ENCODE measurements at regions of chr16 and their contacts with region 1.

Region 1: DNA sequence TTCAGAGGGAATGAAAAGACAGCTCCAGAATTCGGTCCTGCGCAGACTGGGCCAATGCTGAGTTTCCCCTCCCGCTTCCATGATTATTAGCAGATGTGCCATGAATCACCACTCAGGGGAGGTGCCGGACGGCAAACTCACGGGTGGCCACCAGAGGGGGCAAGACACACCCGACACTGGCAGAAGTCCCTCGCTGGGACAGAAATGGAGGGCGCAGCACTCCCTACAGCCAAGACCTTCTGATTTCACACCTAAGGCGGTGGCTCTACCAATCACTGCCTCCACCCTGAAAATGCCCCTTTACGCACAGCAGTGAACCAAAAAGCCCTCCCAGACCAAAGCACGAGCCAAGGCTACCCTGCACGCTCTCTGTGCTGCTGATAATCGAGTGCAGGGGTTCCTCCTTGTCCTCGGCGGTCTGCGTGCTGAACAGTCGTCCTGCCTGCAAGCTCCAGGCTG is 26.8 kb downstream of the TRAP1 start:
- DNase-seq: peak; percentile 90
- ATAC-seq: peak; percentile 94
- H3K4me3 Mint-ChIP-seq: no peak overlapping the region
- H3K27ac Mint-ChIP-seq: peak overlapping the region; percentile 86
- H3K4me1 Mint-ChIP-seq: peaks cover 4% of the 10 kb centered on the region
- H3K27me3 Mint-ChIP-seq: no peaks in the 10 kb centered on the region
- CTCF ChIP-seq: peak; percentile 77

Region 2: GRCh38 chr16:3587547-3588110 is 102.9 kb before region 1 on chr16:
- CTCF ChIA-PET with region 1: no interaction called
- POLR2A ChIA-PET with region 1: no interaction called
- DNase-seq: no peak
- ATAC-seq: no peak
- H3K4me3 Mint-ChIP-seq: no peak overlapping the region
- H3K27ac Mint-ChIP-seq: no peak overlapping the region
- H3K4me1 Mint-ChIP-seq: peaks cover 3% of the 10 kb centered on the region; the same call in 1 of the 2 replicates
- H3K27me3 Mint-ChIP-seq: no peaks in the 10 kb centered on the region; the same call in 1 of the 2 replicates
- CTCF ChIP-seq: no peak

Region 3: GRCh38 chr16:3611146-3611975 is 79.1 kb before region 1 on chr16 and contains the start of gene SLX4:
- CTCF ChIA-PET with region 1: no interaction called
- POLR2A ChIA-PET with region 1: no interaction called
- DNase-seq: peak; percentile 86
- ATAC-seq: peak; percentile 88
- H3K4me3 Mint-ChIP-seq: peak within 1 kb of the TSS; percentile 99
- H3K27ac Mint-ChIP-seq: peak within 1 kb of the TSS; percentile 98
- H3K4me1 Mint-ChIP-seq: peaks cover 23% of the 10 kb centered on the region
- H3K27me3 Mint-ChIP-seq: no peaks in the 10 kb centered on the region
- CTCF ChIP-seq: no peak
- total RNA-seq, gene SLX4: 16.3 to 18.0 TPM (median 16.7 TPM) in 3 replicates

Region 4: DNA sequence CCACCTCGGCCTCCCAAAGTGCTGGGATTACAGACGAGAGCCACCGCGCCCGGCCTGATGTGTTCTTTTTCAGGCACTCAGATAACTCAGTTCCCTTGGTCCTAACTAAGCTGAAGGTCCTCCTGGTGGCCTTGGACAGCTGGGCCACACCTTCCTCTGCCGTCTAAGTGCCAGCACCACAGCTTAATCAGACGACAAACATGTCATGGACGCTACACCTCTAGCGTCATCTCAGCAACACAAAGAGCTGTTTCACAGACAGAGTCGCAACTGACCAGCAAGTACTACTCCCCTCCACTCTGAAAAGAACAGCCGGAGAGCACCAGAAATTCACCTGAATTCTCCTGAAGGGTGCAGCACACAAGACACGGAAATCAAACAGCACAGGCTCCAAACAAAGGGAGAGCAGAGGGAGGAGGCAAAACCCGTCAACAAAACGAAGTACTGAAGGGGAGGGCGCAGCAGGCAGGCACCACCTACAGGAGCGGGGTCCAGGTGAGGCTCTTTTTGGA is 22.4 kb after region 1 on chr16:
- CTCF ChIA-PET with region 1: interaction called, 10 read pairs
- POLR2A ChIA-PET with region 1: no interaction called
- DNase-seq: no peak
- ATAC-seq: peak; percentile 12; the same call in 1 of the 2 replicates
- H3K4me3 Mint-ChIP-seq: no peak overlapping the region
- H3K27ac Mint-ChIP-seq: peak overlapping the region; percentile 63
- H3K4me1 Mint-ChIP-seq: peaks cover 39% of the 10 kb centered on the region
- H3K27me3 Mint-ChIP-seq: no peaks in the 10 kb centered on the region
- CTCF ChIP-seq: no peak

Region 5: GRCh38 chr16:4053301-4053845 is 362.9 kb after region 1 on chr16:
- CTCF ChIA-PET with region 1: no interaction called
- POLR2A ChIA-PET with region 1: no interaction called
- DNase-seq: no peak
- ATAC-seq: no peak
- H3K4me3 Mint-ChIP-seq: no peak overlapping the region
- H3K27ac Mint-ChIP-seq: no peak overlapping the region
- H3K4me1 Mint-ChIP-seq: peaks cover 21% of the 10 kb centered on the region
- H3K27me3 Mint-ChIP-seq: no peaks in the 10 kb centered on the region
- CTCF ChIP-seq: no peak